ENCODE measurements at regions of chr11 and their contacts with region 1.

Region 1: GRCh38 chr11:5380740-5381342 is 2.8 kb upstream of the OR51M1 start:
- DNase-seq: peak; percentile 55 to 79 (median 66)
- H3K4me3 ChIP-seq: no peak overlapping the region
- H3K27ac ChIP-seq: no peak overlapping the region
- H3K4me1 ChIP-seq: no peaks in the 10 kb centered on the region
- H3K27me3 ChIP-seq: no peaks in the 10 kb centered on the region
- CTCF ChIP-seq: peak; percentile 69 to 80 (median 76)
- POLR2A ChIP-seq: no peak

Region 2: DNA sequence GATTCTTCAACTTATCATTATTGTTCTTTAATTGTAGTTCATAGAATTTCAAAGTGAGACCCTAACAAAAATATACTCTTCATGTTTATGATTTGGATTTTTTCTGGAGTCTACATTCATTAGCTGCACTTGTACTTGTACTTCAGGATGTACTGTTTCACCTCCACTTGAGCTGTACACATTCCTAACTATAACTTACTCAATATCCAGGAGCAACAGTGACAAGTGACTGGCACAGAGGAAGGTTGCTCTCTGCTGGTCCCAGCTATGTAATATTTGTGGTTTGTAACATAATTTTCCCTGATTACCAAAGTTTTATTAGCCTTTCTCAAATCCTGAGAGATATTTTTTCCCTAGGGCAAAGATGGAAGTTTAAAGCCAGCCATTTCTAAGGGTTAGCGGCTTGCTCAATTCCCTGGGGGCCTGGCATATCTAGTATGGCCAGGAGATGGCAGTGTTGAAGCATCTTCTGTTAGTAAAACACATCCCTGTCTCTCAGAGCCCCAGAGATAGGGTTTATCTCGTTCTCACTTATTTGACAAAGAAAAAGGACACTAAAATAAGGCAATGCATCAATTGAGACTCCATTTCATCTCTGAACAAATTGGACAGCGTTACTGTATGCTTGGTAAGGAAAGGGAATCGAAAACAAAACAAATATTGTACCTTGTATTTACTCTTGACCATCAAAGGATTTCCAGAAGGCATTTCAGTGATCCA is 256.9 kb before region 1 on chr11:
- intact Hi-C with region 1: loop called in 1 of 2 experiments (anchors 10 kb)
- DNase-seq: peak; percentile 43 to 87 (median 67)
- H3K4me3 ChIP-seq: no peak overlapping the region
- H3K27ac ChIP-seq: no peak overlapping the region
- H3K4me1 ChIP-seq: no peaks in the 10 kb centered on the region
- H3K27me3 ChIP-seq: no peaks in the 10 kb centered on the region
- CTCF ChIP-seq: peak; percentile 60 to 84 (median 75)
- POLR2A ChIP-seq: no peak

Region 3: DNA sequence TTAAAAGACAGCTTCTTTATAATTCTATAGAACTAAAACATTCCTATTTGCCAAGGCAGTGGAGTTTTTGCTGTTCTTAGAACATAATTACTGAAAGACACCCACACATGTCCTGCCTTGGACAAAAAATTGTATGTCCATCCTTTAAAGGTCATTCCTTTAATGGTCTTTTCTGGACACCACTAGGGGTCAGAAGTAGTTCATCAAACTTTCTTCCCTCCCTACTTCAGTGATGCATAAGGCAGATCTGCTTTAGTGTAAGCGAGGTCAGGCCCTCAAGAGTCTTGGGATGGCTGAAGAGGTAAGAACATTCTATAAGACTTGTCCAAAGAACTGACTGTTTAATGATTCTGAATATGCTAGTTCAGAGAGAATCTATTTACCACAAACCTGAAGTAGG is 176.1 kb before region 1 on chr11:
- intact Hi-C with region 1: loop called in 1 of 2 experiments (anchors 5 kb)
- DNase-seq: peak in 2 of 7 donors; percentile 11 to 19
- H3K4me3 ChIP-seq: no peak overlapping the region
- H3K27ac ChIP-seq: no peak overlapping the region
- H3K4me1 ChIP-seq: no peaks in the 10 kb centered on the region
- H3K27me3 ChIP-seq: no peaks in the 10 kb centered on the region
- CTCF ChIP-seq: peak; percentile 22 to 66 (median 58)
- POLR2A ChIP-seq: no peak

Measured in adrenal gland (tissue), 19 donors.